Activated CD4-positive, alpha-beta memory T cell treated with anti-CD3 and anti-CD28 coated beads for 36 hours (primary cell): ENCODE measurements at regions of chr11 and their contacts with region 1.

Region 1: GRCh38 chr11:34481307-34481706 is 32.3 kb downstream of the ELF5 start:
- DNase-seq: no peak
- H3K4me3 Mint-ChIP-seq: no peak overlapping the region
- H3K27ac Mint-ChIP-seq: no peak overlapping the region
- H3K4me1 Mint-ChIP-seq: no peaks in the 10 kb centered on the region
- H3K27me3 Mint-ChIP-seq: no peaks in the 10 kb centered on the region

Region 2: GRCh38 chr11:34468209-34468841 is 13.0 kb before region 1 on chr11:
- CTCF ChIA-PET with region 1: interaction called, 10 read pairs
- POLR2A ChIA-PET with region 1: no interaction called
- intact Hi-C with region 1: no loop called
- DNase-seq: peak; percentile 67
- H3K4me3 Mint-ChIP-seq: no peak overlapping the region
- H3K27ac Mint-ChIP-seq: no peak overlapping the region
- H3K4me1 Mint-ChIP-seq: peaks cover 7% of the 10 kb centered on the region
- H3K27me3 Mint-ChIP-seq: no peaks in the 10 kb centered on the region

Region 3: DNA sequence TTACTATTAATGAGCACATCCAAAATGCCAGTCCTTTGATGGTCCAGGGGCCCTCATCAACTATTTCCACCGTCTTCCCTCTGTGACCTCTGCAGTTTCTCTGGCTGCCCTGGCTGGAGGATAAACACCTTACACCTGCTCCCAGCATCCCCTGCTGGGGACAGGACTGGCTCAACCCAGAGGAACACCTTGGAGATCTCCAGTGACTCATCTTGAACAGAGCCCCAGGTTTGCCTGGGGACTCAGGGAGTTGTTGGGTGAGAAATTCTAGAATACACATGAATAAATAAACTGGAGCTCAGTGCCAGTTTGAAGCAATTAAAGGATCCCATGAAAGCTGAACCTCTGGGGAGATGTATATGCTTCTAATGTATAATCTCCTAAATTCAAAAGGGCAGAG is 56.3 kb after region 1 on chr11:
- CTCF ChIA-PET with region 1: no interaction called
- POLR2A ChIA-PET with region 1: no interaction called
- intact Hi-C with region 1: no loop called
- DNase-seq: no peak
- H3K4me3 Mint-ChIP-seq: no peak overlapping the region
- H3K27ac Mint-ChIP-seq: no peak overlapping the region
- H3K4me1 Mint-ChIP-seq: no peaks in the 10 kb centered on the region
- H3K27me3 Mint-ChIP-seq: peaks cover 27% of the 10 kb centered on the region